ENCODE measurements at regions of chr19 and their contacts with region 1.

Region 1: DNA sequence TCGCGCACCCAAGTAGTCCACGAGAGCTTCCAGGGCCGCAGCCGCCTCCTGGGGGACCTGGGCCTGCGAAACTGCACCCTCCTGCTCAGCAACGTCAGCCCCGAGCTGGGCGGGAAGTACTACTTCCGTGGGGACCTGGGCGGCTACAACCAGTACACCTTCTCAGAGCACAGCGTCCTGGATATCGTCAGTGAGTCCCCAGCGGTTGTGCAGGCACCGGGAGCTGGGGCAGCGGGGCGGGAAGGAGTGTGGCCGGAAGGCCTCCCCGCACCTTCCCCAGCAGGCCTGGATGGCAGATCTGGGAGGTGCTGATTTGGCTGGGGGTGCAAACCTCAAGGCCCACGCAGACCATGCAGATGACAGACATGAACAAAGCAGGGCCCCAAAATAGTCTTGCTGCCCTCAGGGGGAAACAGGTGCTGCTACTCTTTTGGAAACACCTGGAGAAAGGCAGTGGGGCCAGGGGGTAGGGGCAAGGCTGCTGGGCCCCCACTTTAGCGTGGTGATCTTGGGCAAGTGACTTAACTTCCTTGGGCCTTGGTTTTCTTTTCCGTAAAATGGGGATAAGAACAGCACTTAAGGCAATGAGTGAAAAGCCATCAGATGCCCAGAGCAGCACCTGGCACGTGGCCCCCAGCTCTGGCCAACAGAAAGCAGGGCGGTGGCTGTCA is 4.0 kb downstream of the MAG start:
- DNase-seq: peak; percentile 93 to 99 (median 98)
- H3K4me3 ChIP-seq: peak overlapping the region in 1 of 7 experiments; percentile 30
- H3K27ac ChIP-seq: no peak overlapping the region
- H3K4me1 ChIP-seq: peaks cover 6 to 54% (median 43%) of the 10 kb centered on the region in 4 experiments
- H3K27me3 ChIP-seq: no peaks in the 10 kb centered on the region

Region 2: DNA sequence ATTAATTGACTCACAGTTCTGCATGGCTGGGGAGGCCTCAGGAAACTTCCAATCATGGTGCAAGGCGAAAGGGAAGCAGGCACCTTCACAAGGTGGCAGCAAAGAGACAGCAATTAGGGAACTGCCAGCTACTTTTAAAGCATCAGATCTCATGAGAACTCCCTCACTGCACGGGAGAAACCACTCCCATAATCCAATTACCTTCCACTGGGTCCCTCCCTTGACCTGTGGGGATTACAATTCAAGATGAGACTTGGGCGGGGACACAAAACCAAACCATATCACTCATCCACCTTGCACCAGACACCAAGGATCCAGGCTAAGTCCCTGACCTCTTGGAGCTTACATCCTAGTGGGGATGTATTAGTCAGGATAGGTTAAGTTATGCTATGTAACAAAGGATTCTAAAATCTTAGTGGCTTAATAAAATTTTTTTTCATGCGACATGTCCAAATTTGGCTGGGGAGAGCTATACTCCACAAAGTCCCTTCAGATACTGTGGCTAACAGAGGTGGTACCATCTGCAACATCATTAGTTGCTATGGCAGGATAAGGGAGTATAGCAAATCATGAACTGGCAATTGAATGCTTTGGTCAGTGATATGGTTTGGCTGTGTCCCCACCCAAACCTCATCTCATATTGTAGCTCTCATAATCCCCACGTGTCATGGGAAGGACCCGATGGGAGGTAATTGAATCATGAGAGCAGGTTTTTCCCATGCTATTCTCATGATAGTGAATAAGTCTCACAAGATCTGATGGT is 59.1 kb before region 1 on chr19:
- CTCF ChIA-PET with region 1: no interaction called
- POLR2A ChIA-PET with region 1: no interaction called
- DNase-seq: peak in 1 of 3 donors; percentile 40
- H3K4me3 ChIP-seq: no peak overlapping the region
- H3K27ac ChIP-seq: no peak overlapping the region
- H3K4me1 ChIP-seq: peaks cover 0 to 11% (median 3%) of the 10 kb centered on the region in 4 experiments
- H3K27me3 ChIP-seq: peaks cover 0 to 2% (median 0%) of the 10 kb centered on the region in 5 experiments

Region 3: DNA sequence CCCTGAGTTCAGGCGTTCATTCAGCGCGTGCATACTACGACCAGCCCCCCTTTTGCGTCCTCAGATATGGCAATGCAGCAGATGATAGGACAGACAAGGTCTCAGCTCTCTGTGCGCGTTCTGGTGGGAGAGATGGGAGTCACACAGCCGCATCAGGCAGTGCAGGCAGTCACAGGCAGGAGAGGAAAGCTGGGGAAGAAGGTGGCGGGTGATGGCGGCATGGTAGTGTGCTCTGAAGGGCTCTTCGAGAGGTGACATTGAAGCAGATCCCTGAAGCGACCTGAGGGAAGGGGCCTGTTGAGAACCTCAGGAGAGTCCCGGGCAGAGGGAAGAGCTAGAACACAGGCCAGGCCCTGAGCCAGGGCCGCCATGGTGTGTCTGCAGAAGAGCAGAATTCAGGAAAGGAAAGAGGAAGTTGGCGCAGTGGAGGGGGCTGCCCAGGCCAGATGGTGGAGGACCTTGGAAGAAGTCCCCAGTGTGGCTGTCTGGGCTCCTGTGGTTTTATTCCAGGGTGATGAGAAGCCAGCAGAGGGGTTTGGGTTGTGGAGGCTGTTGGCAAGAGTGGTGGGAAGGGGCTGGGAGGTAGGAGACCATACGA is 23.7 kb before region 1 on chr19:
- CTCF ChIA-PET with region 1: interaction called, 14 read pairs
- POLR2A ChIA-PET with region 1: no interaction called
- DNase-seq: peak; percentile 59 to 87 (median 86)
- H3K4me3 ChIP-seq: peak overlapping the region in 2 of 7 experiments; percentile 3 to 10
- H3K27ac ChIP-seq: no peak overlapping the region
- H3K4me1 ChIP-seq: peaks cover 0 to 42% (median 32%) of the 10 kb centered on the region in 4 experiments
- H3K27me3 ChIP-seq: no peaks in the 10 kb centered on the region

Region 4: DNA sequence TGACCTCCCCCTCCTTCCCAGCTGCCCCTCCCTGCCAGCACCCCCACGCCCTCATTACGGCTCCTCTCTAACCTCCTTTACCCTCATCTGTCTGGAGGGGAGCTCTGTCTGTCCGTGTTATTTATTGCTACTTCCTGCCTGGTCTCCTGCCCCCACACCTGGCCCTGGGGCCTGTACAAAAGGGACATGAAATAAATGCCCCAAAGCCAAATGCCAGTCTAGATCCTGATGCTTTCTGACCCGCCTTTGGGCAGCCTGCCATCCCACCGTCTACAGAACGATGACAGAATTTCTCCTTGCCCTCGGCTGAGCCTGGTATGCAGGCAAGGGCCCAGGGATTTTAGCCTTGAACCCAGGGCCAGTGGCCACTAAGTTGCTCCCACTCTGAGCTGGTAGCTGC is 17.7 kb after region 1 on chr19:
- CTCF ChIA-PET with region 1: interaction called, 11 read pairs
- POLR2A ChIA-PET with region 1: no interaction called
- DNase-seq: peak in 2 of 3 donors; percentile 44 to 48
- H3K4me3 ChIP-seq: no peak overlapping the region
- H3K27ac ChIP-seq: no peak overlapping the region
- H3K4me1 ChIP-seq: peaks cover 3 to 54% (median 30%) of the 10 kb centered on the region in 4 experiments
- H3K27me3 ChIP-seq: no peaks in the 10 kb centered on the region